ENCODE measurements at regions of chr4 and their contacts with region 1.

Region 1: DNA sequence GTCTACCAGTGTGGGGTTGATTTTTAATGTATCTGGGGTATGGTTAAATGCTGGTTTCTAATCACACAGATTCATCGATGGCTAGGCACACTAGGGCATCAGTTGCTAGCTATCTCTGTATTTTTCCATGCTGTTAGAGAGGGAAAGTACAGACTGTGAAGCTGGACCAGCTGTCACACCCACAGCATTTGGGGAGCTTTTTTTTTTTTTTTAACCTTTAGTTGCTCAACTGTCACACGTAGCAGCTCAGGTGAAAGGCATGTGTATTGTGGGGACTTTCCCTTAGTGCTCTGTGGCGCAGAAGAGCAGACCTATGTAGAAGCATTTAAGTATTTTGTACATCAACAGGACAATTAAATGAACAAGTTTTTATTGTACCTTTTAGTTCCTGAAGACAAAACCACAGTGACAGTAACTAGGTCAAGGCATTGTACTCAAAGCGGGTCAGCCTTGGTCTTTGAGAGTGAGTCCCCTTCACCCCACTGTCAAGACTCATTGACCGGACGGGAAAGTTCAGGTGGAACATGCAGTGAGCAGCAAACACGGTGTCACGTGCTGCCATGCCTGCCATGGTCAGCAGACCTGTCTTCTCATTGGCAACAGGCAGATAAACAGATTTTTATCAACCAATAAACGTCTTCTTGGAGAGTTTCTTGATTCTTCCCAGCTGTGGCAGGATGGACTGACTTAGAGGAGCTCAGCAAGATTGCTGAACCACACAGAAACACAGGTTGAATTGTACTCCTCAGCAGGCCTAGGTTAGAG is 65.3 kb downstream of the CASP3 start:
- DNase-seq: no peak
- ATAC-seq: peak; percentile 54
- H3K4me3 ChIP-seq: no peak overlapping the region
- H3K4me3 Mint-ChIP-seq: peak overlapping the region in 2 of 10 donors; percentile 9 to 26
- H3K27ac ChIP-seq: no peak overlapping the region
- H3K27ac Mint-ChIP-seq: peak overlapping the region in 5 of 9 donors; percentile 4 to 53 (median 48)
- H3K4me1 ChIP-seq: no peaks in the 10 kb centered on the region
- H3K4me1 Mint-ChIP-seq: peaks cover 2 to 22% (median 12%) of the 10 kb centered on the region in 7 donors
- H3K27me3 ChIP-seq: no peaks in the 10 kb centered on the region
- H3K27me3 Mint-ChIP-seq: peaks cover 0 to 3% (median 0%) of the 10 kb centered on the region in 5 donors

Region 2: DNA sequence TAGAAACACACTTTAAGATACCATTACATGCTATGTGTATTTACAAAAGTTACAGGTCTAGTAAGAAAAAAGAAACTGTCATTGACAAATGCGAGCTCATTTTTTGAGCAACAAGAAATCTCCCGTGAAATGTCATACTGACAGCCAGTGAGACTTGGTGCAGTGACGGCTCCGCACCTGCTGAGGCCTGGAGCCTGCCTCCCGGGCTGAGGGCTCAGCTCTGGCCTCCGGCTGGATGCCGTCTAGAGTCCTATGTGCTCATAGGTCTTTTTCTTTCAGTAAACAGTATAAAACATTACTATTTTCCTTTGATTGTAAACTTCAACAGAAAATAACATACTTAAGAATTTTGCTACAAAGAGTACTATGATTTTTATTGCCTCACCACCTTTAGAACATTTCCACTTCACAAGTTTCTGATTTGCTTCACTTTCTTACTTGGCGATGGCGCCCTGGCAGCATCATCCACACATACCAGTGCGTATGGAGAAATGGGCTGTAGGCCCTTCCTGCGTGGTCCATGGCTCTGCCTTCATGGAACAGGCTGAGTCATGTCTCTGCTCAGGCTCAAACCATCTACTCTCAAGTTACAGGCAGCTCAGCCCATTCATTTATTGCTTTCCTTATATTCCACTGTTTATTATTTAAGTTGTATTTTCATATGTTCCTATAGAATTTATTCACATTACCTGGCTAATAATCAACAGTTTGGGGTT is 44.0 kb after region 1 on chr4:
- CTCF ChIA-PET with region 1: no interaction called
- POLR2A ChIA-PET with region 1: no interaction called
- intact Hi-C with region 1: loop called in 1 of 2 experiments (anchors 5 kb)
- DNase-seq: no peak
- ATAC-seq: no peak
- H3K4me3 ChIP-seq: no peak overlapping the region
- H3K4me3 Mint-ChIP-seq: peak overlapping the region in 1 of 10 donors; percentile 70
- H3K27ac ChIP-seq: no peak overlapping the region
- H3K27ac Mint-ChIP-seq: peak overlapping the region in 4 of 9 donors; percentile 20 to 69 (median 52)
- H3K4me1 ChIP-seq: peaks cover 14 to 28% of the 10 kb centered on the region in 2 donors
- H3K4me1 Mint-ChIP-seq: peaks cover 33 to 52% (median 45%) of the 10 kb centered on the region in 7 donors
- H3K27me3 ChIP-seq: no peaks in the 10 kb centered on the region
- H3K27me3 Mint-ChIP-seq: no peaks in the 10 kb centered on the region

Region 3: GRCh38 chr4:184762100-184762499 is 178.2 kb after region 1 on chr4:
- CTCF ChIA-PET with region 1: no interaction called
- POLR2A ChIA-PET with region 1: no interaction called
- intact Hi-C with region 1: no loop called
- DNase-seq: peak in 8 of 9 donors; percentile 38 to 84 (median 75)
- ATAC-seq: peak; percentile 96
- H3K4me3 ChIP-seq: no peak overlapping the region
- H3K4me3 Mint-ChIP-seq: peak overlapping the region; percentile 6 to 78 (median 66)
- H3K27ac ChIP-seq: peak overlapping the region; percentile 36
- H3K27ac Mint-ChIP-seq: peak overlapping the region; percentile 83 to 94 (median 87)
- H3K4me1 ChIP-seq: peaks cover 5 to 14% of the 10 kb centered on the region in 2 donors
- H3K4me1 Mint-ChIP-seq: peaks cover 0 to 23% (median 20%) of the 10 kb centered on the region in 7 donors
- H3K27me3 ChIP-seq: no peaks in the 10 kb centered on the region
- H3K27me3 Mint-ChIP-seq: no peaks in the 10 kb centered on the region

Measured in naive thymus-derived CD4-positive, alpha-beta T cell (primary cell).